ENCODE measurements at regions of chr7 and their contacts with region 1.

Region 1: DNA sequence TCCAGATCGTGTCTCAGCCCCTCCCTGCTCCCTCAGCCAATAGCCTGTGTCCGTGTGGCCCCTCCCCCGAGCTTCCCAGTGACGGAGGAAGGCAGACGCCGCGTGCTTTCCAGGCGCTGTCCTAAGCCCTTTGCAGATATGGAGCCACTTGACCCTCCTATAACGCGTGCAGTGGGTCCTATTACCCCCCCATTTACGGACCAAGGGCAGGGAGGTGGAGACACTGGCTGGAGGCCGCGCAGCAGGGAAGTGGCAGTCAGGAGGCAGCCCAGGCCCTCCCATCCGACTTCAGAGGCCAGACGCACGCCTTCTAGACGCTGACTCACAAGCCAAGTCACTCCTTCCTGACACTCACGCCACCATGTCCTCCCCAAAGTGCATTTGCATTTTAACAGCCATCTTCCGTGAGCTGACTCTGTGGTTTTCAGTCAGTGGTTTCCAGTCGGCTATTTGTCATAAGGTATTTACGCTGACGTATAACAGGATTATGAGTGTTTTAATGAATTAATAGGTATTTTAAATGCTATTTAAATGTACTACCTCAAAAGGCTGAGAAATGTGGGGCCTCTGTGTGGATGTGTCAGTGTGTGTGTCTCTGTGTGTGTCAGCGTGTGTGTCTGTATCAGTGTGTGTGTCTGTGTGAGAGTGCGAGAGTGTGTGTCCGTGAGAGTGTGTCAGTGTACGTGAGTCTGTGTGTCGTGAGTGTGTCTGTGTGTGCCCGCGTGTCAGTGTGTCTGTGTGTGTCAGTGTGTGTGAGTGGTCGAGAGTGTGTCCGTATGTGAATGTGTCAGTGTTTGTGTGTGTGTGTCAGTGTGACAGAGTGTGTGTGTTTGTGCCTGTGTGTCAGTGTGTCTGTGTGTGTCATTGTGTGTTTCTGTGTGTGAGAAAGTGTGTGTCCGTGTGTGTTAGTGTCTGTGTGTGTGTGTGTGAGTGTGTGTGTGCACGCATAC is 92.0 kb upstream of the INSIG1 start:
- DNase-seq: peak; percentile 99
- H3K4me3 ChIP-seq: peak overlapping the region; percentile 25
- CTCF ChIP-seq: no peak

Region 2: DNA sequence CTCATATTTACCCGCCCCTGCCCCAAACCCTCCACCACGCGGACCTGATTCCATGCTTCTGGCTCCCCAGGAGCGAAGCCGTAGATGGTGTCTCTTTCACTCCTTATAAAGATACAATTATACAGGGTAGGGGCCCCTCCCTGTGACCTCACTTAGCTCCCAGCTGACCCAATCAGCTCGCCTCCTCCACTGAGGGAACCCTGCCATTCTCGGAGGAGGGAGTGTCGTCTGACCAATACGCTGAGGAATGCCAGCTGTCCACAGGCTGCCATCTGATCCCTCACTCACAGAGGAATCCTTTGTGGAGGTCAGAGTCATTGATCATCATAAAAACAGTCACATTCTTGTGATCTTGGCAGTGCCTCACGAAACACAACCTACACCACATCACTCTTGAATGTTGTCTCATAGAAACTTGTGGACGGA is 24.5 kb after region 1 on chr7:
- CTCF ChIA-PET with region 1: interaction called, 3 read pairs
- POLR2A ChIA-PET with region 1: interaction called, 10 read pairs
- DNase-seq: peak; percentile 98
- H3K4me3 ChIP-seq: no peak overlapping the region
- CTCF ChIP-seq: no peak

Region 3: GRCh38 chr7:155298834-155299534 is 93.3 kb after region 1 on chr7:
- CTCF ChIA-PET with region 1: interaction called, 4 read pairs
- POLR2A ChIA-PET with region 1: interaction called, 26 read pairs
- DNase-seq: peak; percentile 72
- H3K4me3 ChIP-seq: peak overlapping the region; percentile 73
- CTCF ChIP-seq: no peak

Region 4: DNA sequence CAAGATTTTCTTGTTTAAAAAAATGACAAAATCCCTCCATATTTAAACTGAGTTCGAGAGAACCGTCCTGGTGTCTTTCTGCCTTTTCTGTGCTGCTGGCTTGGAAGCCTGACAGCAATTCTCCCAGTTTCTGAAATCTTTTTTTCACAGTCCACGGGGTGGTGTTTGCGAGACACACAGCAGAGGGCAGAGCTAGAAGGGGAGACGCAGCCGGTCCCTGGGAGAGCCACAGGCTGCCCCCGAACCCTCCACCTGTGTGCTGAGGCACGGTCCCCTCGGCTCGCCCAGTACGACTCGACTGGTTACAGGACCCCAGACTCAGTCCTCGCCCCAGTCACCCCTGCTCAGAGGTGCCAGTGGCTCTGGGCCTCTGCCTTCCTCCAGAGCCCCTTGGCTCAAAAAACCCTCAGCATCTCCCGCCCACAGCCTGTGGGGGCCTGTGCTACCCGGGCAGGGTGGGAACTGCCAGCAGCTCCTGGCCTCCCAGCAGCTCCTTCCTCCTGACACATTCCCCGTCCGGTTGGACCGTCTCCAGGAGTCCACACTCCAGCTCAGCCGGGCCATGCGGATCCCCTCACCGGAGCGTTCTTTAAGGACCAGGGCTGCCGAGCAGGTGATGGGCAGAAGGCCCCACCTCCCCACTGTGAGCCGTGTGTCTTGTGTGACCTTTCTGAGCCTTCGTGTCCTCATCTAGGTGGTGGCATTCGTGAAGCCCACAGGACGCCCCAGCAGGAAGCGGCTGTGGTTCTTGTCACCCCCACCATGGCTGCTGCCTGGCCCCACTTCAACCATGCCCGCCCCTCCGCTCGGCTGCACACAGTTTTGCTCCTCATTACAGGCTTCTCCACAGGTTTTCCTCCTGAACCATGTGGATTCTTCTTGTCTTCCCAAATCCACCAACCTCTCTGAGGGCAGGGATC is 200.0 kb after region 1 on chr7:
- CTCF ChIA-PET with region 1: no interaction called
- POLR2A ChIA-PET with region 1: no interaction called
- DNase-seq: no peak
- H3K4me3 ChIP-seq: no peak overlapping the region
- CTCF ChIP-seq: no peak

Measured in AG04449 (cell line).